ENCODE measurements at regions of chr21 and their contacts with region 1.

Region 1: GRCh38 chr21:34845521-34846451 is 177.0 kb downstream of the CLIC6 start:
- DNase-seq: peak; percentile 72 to 94
- H3K4me3 ChIP-seq: peak overlapping the region; percentile 19; the same call in 1 of the 2 replicates
- H3K27ac ChIP-seq: peak overlapping the region; percentile 89
- H3K4me1 ChIP-seq: peaks cover 68% of the 10 kb centered on the region
- H3K27me3 ChIP-seq: no peaks in the 10 kb centered on the region
- CTCF ChIP-seq: no peak

Region 2: DNA sequence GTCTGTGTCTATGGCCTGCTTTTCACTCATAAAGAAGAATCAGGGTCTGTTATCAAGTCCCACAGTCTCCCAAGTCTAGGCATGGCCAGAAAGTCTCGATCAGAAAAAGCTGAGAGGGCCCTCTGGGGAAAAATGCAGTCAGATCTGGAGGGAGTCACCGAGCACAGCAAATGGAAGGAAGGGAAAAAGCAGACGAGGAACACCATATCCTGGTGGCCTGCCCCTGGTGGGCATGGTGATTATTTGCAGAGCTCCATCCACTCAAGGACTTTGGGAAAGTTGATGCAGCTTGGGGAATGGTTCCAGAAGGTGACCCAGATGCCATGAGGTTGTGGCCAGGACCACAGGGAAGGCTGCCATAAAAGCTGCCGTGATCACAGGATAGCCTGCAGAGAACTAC is 12.1 kb after region 1 on chr21:
- CTCF ChIA-PET with region 1: no interaction called
- POLR2A ChIA-PET with region 1: interaction called, 32 read pairs
- intact Hi-C with region 1: no loop called
- DNase-seq: no peak
- H3K4me3 ChIP-seq: no peak overlapping the region
- H3K27ac ChIP-seq: no peak overlapping the region
- H3K4me1 ChIP-seq: no peaks in the 10 kb centered on the region
- H3K27me3 ChIP-seq: no peaks in the 10 kb centered on the region
- CTCF ChIP-seq: no peak

Region 3: GRCh38 chr21:34865928-34866284 is 20.1 kb after region 1 on chr21:
- CTCF ChIA-PET with region 1: no interaction called
- POLR2A ChIA-PET with region 1: no interaction called
- intact Hi-C with region 1: loop called (anchors 1 kb)
- DNase-seq: peak; percentile 69 to 89
- H3K4me3 ChIP-seq: 0 out of 2 replicates have a peak overlapping the region, but pooled peaks have one; percentile 11
- H3K27ac ChIP-seq: peak overlapping the region; percentile 88
- H3K4me1 ChIP-seq: peaks cover 69% of the 10 kb centered on the region
- H3K27me3 ChIP-seq: no peaks in the 10 kb centered on the region
- CTCF ChIP-seq: no peak

Region 4: DNA sequence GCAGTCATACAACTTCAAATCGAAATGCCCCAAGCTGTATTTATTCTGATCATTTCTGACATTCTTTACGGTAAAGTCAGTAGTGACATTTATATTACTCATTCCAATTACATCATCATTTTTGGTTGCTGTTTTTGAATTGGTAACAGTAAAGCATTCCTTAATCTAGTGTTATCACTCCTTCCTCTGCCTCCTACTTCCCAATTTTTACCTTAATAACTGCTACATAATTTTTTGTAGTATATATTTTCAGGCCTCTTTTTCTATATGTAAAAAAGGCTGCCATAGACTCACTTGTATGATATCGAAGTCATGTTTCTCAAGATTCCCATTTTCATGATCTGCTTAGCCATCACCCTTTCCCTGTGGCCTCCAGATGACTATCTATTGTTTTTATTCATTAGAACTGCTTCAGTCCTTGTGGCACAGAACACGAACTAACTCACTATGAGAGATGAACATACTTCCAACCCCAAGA is 36.1 kb after region 1 on chr21:
- CTCF ChIA-PET with region 1: no interaction called
- POLR2A ChIA-PET with region 1: interaction called, 23 read pairs
- intact Hi-C with region 1: loop called (anchors 1 kb)
- DNase-seq: peak in 1 of 2 experiments; percentile 87
- H3K4me3 ChIP-seq: peak overlapping the region; percentile 97
- H3K27ac ChIP-seq: peak overlapping the region; percentile 99
- H3K4me1 ChIP-seq: peaks cover 69% of the 10 kb centered on the region
- H3K27me3 ChIP-seq: no peaks in the 10 kb centered on the region
- CTCF ChIP-seq: no peak

Measured in PC-9 (cell line).